ENCODE measurements at regions of chr1 and their contacts with region 1.

Region 1: DNA sequence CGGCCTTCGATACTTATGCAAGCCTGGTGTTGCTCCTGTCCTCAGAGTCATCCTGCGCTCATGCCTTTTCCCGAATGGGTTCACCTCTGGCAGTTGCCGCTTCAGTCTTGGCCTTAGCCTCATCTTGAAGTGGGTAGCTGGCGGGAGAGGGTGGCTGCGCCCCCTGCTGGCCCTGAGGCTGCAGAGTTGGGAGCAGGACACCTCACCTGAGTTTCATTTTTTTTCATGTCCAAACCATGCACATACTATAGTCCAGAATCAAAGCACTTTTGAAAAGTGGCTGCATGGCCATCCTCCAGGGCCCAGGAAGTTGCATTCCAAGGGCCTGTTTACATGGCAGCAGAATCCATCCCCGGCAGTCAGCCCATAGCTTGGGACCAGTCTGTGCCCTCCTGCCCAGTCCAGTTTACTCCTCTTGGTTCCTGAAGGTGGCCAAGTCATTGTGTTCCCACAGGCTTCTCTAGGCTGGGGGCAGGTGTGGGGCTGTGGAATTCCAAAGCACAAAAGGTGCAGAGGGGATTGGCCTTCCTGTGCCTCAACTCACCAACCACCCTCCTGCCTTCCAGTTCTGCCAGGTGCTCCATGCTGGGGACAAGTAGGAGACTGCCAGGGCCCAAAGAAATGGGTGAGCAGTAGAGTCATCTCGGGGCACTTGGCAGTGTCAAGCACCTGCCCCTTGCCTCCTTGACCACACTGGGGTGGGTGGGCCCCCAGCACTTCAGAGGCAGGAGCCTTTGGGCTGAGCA is 44.0 kb downstream of the YARS1 start:
- DNase-seq: peak; percentile 75
- H3K4me3 ChIP-seq: no peak overlapping the region
- H3K27ac ChIP-seq: peak overlapping the region; percentile 15
- H3K4me1 ChIP-seq: no peaks in the 10 kb centered on the region
- CTCF ChIP-seq: peak; percentile 99

Region 2: DNA sequence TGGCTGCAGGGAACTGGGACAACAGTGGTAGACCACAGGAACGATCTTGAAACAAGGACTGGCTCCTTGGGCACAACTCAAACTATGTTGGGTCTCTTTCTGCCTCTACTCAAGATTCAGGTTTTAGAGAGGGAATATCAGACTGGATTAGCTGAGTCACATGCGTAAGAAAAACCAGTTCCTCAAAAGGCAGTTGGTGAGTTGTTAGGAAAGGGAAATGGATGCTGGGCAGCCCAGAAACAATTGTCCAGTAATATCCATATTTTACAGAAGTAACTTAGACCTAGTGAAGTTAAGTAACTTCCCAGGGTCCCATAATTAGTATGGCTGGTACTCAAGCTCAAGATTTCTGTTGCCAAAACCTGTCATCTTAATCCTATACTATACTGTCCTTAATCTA is 727.4 kb before region 1 on chr1:
- CTCF ChIA-PET with region 1: no interaction called
- POLR2A ChIA-PET with region 1: no interaction called
- intact Hi-C with region 1: no loop called
- DNase-seq: no peak
- H3K4me3 ChIP-seq: no peak overlapping the region
- H3K27ac ChIP-seq: no peak overlapping the region
- H3K4me1 ChIP-seq: no peaks in the 10 kb centered on the region
- CTCF ChIP-seq: no peak

Region 3: DNA sequence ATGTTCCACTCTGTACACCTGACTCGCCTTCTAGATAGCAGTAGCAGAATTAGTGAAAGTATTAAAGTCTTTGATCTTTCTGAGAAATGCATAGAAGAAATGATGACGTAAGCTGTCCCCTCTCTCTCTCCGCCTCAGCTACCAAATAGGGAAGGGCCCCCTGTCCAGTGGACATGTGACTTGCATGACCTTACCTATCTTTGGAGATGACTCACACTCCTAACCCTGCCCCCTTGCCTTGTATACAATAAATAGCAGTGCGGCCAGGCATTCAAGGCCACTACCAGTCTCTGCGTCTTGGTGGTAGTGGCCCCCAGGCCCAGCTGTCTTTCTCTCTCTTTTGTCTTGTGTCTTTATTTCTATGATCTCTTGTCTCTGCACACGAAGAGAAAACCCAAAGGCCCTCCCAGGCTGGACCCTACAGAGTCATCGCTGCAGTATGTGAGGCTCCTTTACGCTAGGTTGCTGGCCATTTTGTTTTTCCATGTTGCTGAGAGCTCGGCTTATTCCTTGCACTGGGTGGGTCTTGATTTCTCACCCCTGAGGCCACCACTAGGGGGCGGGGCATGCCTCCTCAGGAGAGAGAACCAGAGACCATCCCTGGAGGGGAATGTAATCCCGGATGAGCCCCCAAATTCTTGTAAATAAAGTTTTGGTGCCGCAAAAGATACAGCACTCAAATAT is 324.3 kb before region 1 on chr1:
- CTCF ChIA-PET with region 1: no interaction called
- POLR2A ChIA-PET with region 1: no interaction called
- intact Hi-C with region 1: loop called (anchors 5 kb)
- DNase-seq: peak; percentile 44
- H3K4me3 ChIP-seq: no peak overlapping the region
- H3K27ac ChIP-seq: no peak overlapping the region
- H3K4me1 ChIP-seq: no peaks in the 10 kb centered on the region
- CTCF ChIP-seq: peak; percentile 57

Measured in OCI-LY7 (cell line).